Activated B cell treated with CpG ODN at 0.5 μM for 24 hours (primary cell): ENCODE measurements at regions of chr10 and their contacts with region 1.

Region 1: GRCh38 chr10:103888113-103888841 is 29.7 kb downstream of the STN1 start:
- DNase-seq: no peak
- ATAC-seq: peak; percentile 77
- H3K4me3 Mint-ChIP-seq: no peak overlapping the region
- H3K27ac Mint-ChIP-seq: no peak overlapping the region
- H3K4me1 Mint-ChIP-seq: peaks cover 2% of the 10 kb centered on the region
- H3K27me3 Mint-ChIP-seq: no peaks in the 10 kb centered on the region
- CTCF ChIP-seq: peak; percentile 67

Region 2: DNA sequence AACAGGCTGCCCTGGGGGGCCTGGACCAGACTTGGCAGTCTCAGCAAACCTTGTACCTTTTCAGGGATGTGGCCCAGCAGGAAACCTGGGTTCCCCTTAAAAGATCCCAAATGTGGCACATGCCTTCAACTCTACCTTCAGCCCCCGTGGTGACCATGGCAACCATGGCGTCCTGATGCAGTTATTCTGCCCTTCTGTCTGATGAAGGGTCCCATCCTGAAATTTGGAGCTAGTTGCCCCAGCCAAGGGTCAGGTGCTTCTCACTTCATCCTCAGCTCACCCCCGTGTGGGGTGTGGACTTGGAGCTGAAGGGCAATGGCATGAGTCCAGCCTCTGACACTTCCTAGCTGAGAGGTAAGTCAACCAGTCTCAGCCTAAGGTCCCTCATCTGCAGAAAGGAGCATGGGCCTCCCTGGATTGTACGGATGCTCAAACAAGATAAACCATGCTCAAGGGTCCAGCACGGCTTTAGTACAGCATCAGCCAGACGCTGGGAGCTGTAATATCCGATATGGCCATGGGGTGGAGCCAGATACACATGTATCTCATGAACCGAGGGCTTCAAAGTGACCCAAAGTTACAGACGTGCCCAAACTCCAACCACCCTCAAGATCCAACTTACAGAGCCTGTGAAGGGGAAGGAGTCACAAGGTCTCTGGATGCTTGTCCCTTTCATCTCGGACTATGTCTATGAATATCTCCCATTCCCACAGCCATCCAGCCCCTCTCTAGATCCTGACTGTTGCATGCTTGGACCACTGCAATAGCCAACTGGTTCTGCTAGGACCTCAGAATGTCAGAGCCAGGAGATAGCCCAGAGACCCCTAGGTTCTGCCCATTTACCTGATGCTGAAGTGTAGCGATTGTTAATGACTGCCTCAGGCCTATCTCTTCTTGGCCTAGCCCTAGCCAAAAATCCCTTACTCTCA is 175.4 kb before region 1 on chr10:
- CTCF ChIA-PET with region 1: interaction called, 26 read pairs
- POLR2A ChIA-PET with region 1: no interaction called
- intact Hi-C with region 1: loop called (anchors 1 kb)
- DNase-seq: peak; percentile 73
- ATAC-seq: peak; percentile 94
- H3K4me3 Mint-ChIP-seq: no peak overlapping the region
- H3K27ac Mint-ChIP-seq: no peak overlapping the region
- H3K4me1 Mint-ChIP-seq: no peaks in the 10 kb centered on the region
- H3K27me3 Mint-ChIP-seq: no peaks in the 10 kb centered on the region
- CTCF ChIP-seq: no peak

Region 3: GRCh38 chr10:103911021-103911459 is 22.8 kb after region 1 on chr10:
- CTCF ChIA-PET with region 1: interaction called, 5 read pairs
- POLR2A ChIA-PET with region 1: no interaction called
- intact Hi-C with region 1: loop called (anchors 2 kb)
- DNase-seq: no peak
- ATAC-seq: peak; percentile 42
- H3K4me3 Mint-ChIP-seq: no peak overlapping the region
- H3K27ac Mint-ChIP-seq: peak overlapping the region; percentile 86
- H3K4me1 Mint-ChIP-seq: peaks cover 53% of the 10 kb centered on the region
- H3K27me3 Mint-ChIP-seq: no peaks in the 10 kb centered on the region
- CTCF ChIP-seq: no peak

Region 4: GRCh38 chr10:104013489-104013888 is 125.2 kb after region 1 on chr10:
- CTCF ChIA-PET with region 1: no interaction called
- POLR2A ChIA-PET with region 1: no interaction called
- intact Hi-C with region 1: no loop called
- DNase-seq: no peak
- ATAC-seq: no peak
- H3K4me3 Mint-ChIP-seq: no peak overlapping the region
- H3K27ac Mint-ChIP-seq: no peak overlapping the region
- H3K4me1 Mint-ChIP-seq: no peaks in the 10 kb centered on the region
- H3K27me3 Mint-ChIP-seq: no peaks in the 10 kb centered on the region
- CTCF ChIP-seq: no peak

Region 5: DNA sequence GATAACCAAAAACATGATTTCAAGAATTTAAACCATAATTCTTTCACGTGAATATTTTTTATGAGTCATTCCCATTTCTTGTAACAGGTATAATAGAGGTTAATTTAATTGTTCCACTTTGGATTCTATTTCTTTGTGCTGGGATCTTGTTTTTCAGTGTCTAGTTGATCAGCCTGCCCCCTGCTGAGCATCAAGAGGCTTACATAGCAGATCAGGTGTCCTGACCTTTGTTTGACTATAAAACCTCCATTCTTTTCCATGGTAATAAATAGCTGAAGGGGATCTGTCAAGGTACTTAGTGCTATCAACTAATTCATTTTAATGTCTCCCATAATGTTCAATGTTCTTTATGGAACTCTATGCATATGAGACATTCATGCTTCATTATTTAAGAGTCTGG is 192.5 kb after region 1 on chr10:
- CTCF ChIA-PET with region 1: interaction called, 21 read pairs
- POLR2A ChIA-PET with region 1: no interaction called
- intact Hi-C with region 1: loop called (anchors 1 kb)
- DNase-seq: no peak
- ATAC-seq: no peak
- H3K4me3 Mint-ChIP-seq: no peak overlapping the region
- H3K27ac Mint-ChIP-seq: no peak overlapping the region
- H3K4me1 Mint-ChIP-seq: no peaks in the 10 kb centered on the region
- H3K27me3 Mint-ChIP-seq: peaks cover 2% of the 10 kb centered on the region
- CTCF ChIP-seq: no peak

Region 6: GRCh38 chr10:104209575-104210198 is 321.4 kb after region 1 on chr10:
- CTCF ChIA-PET with region 1: interaction called, 14 read pairs
- POLR2A ChIA-PET with region 1: no interaction called
- intact Hi-C with region 1: loop called (anchors 1 kb)
- DNase-seq: no peak
- ATAC-seq: no peak
- H3K4me3 Mint-ChIP-seq: no peak overlapping the region
- H3K27ac Mint-ChIP-seq: no peak overlapping the region
- H3K4me1 Mint-ChIP-seq: no peaks in the 10 kb centered on the region
- H3K27me3 Mint-ChIP-seq: peaks cover 24% of the 10 kb centered on the region
- CTCF ChIP-seq: no peak

Region 7: DNA sequence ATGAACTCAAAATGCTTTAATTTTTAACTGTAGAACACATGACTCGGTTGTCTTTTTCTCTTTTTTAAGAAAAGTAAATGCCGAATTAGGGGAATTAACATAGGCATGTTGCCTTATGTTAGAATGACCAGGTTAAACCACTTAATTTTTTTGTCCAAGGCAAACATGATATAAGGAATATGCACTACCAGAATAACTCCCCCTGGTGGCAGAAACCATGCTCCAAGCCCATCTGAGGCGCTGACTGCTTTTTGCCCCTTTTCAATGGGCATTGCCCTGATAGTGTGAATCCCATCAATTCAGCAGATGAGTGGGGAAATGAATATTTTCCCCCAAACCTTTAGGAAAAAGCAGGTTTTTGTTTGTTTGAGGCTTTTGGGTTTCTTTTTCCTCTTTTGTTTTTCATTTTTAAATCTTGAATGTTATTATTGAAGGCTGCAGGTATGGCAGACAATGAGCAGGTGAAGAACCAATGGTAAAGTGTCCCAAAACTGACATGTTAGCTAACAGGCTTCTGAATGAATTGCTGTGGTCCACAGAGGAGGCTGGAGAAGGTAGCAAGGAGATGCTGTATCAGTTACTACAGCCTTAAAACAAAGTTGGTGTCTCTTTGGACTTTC is 1037.1 kb after region 1 on chr10:
- CTCF ChIA-PET with region 1: no interaction called
- POLR2A ChIA-PET with region 1: no interaction called
- intact Hi-C with region 1: loop called (anchors 10 kb)
- DNase-seq: no peak
- ATAC-seq: no peak
- H3K4me3 Mint-ChIP-seq: no peak overlapping the region
- H3K27ac Mint-ChIP-seq: no peak overlapping the region
- H3K4me1 Mint-ChIP-seq: peaks cover 2% of the 10 kb centered on the region
- H3K27me3 Mint-ChIP-seq: peaks cover 2% of the 10 kb centered on the region
- CTCF ChIP-seq: no peak